CD8-positive, alpha-beta T cell (primary cell): ENCODE measurements at regions of chr1 and their contacts with region 1.

Region 1: GRCh38 chr1:156282479-156283222 is at the start of gene SMG5:
- DNase-seq: peak; percentile 89 to 99 (median 95)
- ATAC-seq: peak; percentile 91
- H3K4me3 ChIP-seq: peak within 1 kb of the TSS; percentile 62 to 80
- H3K4me3 Mint-ChIP-seq: peak within 1 kb of the TSS; percentile 93
- H3K27ac ChIP-seq: peak within 1 kb of the TSS; percentile 38 to 87
- H3K27ac Mint-ChIP-seq: peak within 1 kb of the TSS; percentile 91
- H3K4me1 ChIP-seq: peaks cover 28% of the 10 kb centered on the region
- H3K4me1 Mint-ChIP-seq: peaks cover 38% of the 10 kb centered on the region
- H3K27me3 ChIP-seq: no peaks in the 10 kb centered on the region
- H3K27me3 Mint-ChIP-seq: no peaks in the 10 kb centered on the region
- CTCF ChIP-seq: no peak
- total RNA-seq, gene SMG5: 68.9 to 70.2 TPM

Region 2: DNA sequence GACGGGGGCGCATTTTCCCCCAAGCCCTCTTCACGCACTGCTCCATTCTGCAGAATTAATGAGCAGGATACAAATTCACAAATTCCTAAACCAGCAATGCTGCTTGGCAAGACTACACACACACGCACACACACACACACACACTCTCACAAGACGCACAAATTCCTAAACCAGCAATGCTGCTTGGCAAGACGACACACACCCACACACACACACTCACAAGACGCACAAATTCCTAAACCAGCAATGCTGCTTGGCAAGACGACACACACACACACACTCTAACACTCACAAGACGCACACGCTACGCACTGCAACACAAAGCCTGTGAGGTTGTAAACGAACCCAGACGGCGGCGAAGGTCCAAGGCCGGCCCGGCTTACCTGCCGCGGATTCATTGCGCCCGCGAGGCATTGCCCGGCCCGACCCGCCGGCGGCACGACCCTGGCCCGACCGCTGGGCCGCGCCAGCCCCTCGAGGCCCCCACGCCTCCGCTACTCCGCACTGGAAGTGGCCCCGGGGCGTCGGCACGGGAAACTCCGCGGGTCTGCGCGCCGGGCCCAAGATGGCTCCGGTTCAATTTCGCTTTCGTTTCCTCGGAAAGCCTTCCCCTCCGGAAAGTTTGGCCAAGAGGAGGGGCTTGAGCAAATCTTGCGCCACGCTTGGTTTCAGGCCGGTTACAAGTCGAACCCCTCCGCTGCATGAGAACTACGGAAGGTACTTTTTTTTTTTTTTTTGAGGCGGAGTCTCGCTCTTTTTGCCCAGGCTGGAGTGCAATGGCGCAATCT is 1674.8 kb before region 1 on chr1 and contains the start of gene ADAR:
- CTCF ChIA-PET with region 1: no interaction called
- POLR2A ChIA-PET with region 1: no interaction called
- intact Hi-C with region 1: loop called in 1 of 2 experiments (anchors 5 kb)
- DNase-seq: peak; percentile 72 to 98 (median 87)
- ATAC-seq: peak; percentile 85
- H3K4me3 ChIP-seq: peak within 1 kb of the TSS; percentile 89 to 90
- H3K4me3 Mint-ChIP-seq: peak within 1 kb of the TSS; percentile 98
- H3K27ac ChIP-seq: peak within 1 kb of the TSS; percentile 92 to 96
- H3K27ac Mint-ChIP-seq: peak within 1 kb of the TSS; percentile 98
- H3K4me1 ChIP-seq: peaks cover 59% of the 10 kb centered on the region
- H3K4me1 Mint-ChIP-seq: peaks cover 73% of the 10 kb centered on the region
- H3K27me3 ChIP-seq: no peaks in the 10 kb centered on the region
- H3K27me3 Mint-ChIP-seq: no peaks in the 10 kb centered on the region
- CTCF ChIP-seq: no peak
- total RNA-seq, gene ADAR: 221 to 238 TPM

Region 3: GRCh38 chr1:155859234-155859829 is 423.3 kb before region 1 on chr1 and contains the start of gene SYT11:
- CTCF ChIA-PET with region 1: no interaction called
- POLR2A ChIA-PET with region 1: no interaction called
- intact Hi-C with region 1: loop called in 1 of 2 experiments (anchors 1 kb)
- DNase-seq: peak; percentile 79 to 97 (median 93)
- ATAC-seq: peak; percentile 85
- H3K4me3 ChIP-seq: peak within 1 kb of the TSS; percentile 61 to 64
- H3K4me3 Mint-ChIP-seq: peak within 1 kb of the TSS; percentile 83
- H3K27ac ChIP-seq: peak within 1 kb of the TSS; percentile 45 to 96
- H3K27ac Mint-ChIP-seq: peak within 1 kb of the TSS; percentile 90
- H3K4me1 ChIP-seq: peaks cover 37% of the 10 kb centered on the region
- H3K4me1 Mint-ChIP-seq: peaks cover 44% of the 10 kb centered on the region
- H3K27me3 ChIP-seq: no peaks in the 10 kb centered on the region
- H3K27me3 Mint-ChIP-seq: peaks cover 5% of the 10 kb centered on the region
- CTCF ChIP-seq: no peak
- total RNA-seq, gene SYT11: 6.9 to 8.6 TPM

Region 4: GRCh38 chr1:156020292-156021089 is 262.2 kb before region 1 on chr1 and contains the start of gene SSR2:
- CTCF ChIA-PET with region 1: no interaction called
- POLR2A ChIA-PET with region 1: no interaction called
- intact Hi-C with region 1: loop called in 1 of 2 experiments (anchors 2 kb)
- DNase-seq: peak; percentile 67 to 94 (median 84)
- ATAC-seq: peak; percentile 99
- H3K4me3 ChIP-seq: peak within 1 kb of the TSS; percentile 77 to 83
- H3K4me3 Mint-ChIP-seq: peak within 1 kb of the TSS; percentile 98
- H3K27ac ChIP-seq: peak within 1 kb of the TSS; percentile 61 to 64
- H3K27ac Mint-ChIP-seq: peak within 1 kb of the TSS; percentile 96
- H3K4me1 ChIP-seq: peaks cover 15% of the 10 kb centered on the region
- H3K4me1 Mint-ChIP-seq: peaks cover 30% of the 10 kb centered on the region
- H3K27me3 ChIP-seq: peaks cover 0 to 5% of the 10 kb centered on the region in 2 experiments
- H3K27me3 Mint-ChIP-seq: peaks cover 2% of the 10 kb centered on the region
- CTCF ChIP-seq: no peak
- total RNA-seq, gene SSR2: 208 to 212 TPM

Region 5: GRCh38 chr1:156193488-156194299 is 89.0 kb before region 1 on chr1 and contains the start of gene SLC25A44:
- CTCF ChIA-PET with region 1: no interaction called
- POLR2A ChIA-PET with region 1: interaction called, 3 read pairs
- intact Hi-C with region 1: loop called (anchors 1 kb)
- DNase-seq: peak; percentile 89 to 99 (median 97)
- ATAC-seq: peak; percentile 99
- H3K4me3 ChIP-seq: peak within 1 kb of the TSS; percentile 78 to 88
- H3K4me3 Mint-ChIP-seq: peak within 1 kb of the TSS; percentile 100
- H3K27ac ChIP-seq: peak within 1 kb of the TSS; percentile 67 to 85
- H3K27ac Mint-ChIP-seq: peak within 1 kb of the TSS; percentile 95
- H3K4me1 ChIP-seq: peaks cover 13% of the 10 kb centered on the region
- H3K4me1 Mint-ChIP-seq: peaks cover 47% of the 10 kb centered on the region
- H3K27me3 ChIP-seq: no peaks in the 10 kb centered on the region
- H3K27me3 Mint-ChIP-seq: no peaks in the 10 kb centered on the region
- CTCF ChIP-seq: peak; percentile 13
- total RNA-seq, gene SLC25A44: 12.1 to 12.6 TPM

Region 6: DNA sequence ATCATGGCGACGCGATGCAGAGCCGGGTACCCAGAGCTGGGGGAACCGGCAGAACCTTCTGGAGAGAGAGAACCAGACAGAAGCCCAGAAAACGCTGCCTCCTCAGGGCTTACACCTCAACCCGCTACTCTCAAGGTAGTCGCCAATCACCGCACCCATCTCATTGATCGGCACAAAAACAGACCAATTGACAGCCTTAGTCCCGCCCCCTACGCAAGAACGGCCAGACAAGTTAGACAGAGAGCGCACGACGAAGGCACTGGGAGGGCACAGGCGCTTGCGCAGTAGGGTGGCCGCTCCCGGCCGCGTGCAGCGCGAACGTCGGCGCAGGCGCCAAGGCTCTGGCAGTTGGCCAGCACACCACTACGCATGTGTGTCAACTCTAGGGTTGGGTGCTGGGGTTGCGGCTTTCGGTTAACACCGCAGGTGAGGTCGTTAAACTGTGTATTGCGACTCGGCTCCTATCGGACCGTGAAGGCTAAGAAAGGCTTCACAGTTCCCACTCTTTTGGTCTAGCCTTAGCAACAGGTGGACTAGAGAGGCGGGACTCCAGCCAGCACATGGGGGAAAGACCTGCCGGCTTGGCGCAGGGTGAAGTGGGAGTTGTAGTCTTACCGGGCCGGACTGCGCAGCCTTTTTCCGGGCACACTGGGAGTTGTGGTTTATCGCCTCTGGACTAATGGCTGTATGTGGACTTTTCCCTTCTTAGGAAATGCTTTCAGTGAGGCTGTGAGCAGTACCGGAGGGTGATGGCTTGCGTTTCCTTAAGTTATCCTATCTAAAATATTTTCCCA is 55.7 kb after region 1 on chr1 and contains the starts of genes CCT3 and TSACC:
- CTCF ChIA-PET with region 1: no interaction called
- POLR2A ChIA-PET with region 1: interaction called, 6 read pairs
- intact Hi-C with region 1: loop called (anchors 1 kb)
- DNase-seq: peak; percentile 97 to 100 (median 99)
- ATAC-seq: peak; percentile 95
- H3K4me3 ChIP-seq: peak within 1 kb of the TSS; percentile 69 to 85
- H3K4me3 Mint-ChIP-seq: peak within 1 kb of the TSS; percentile 95
- H3K27ac ChIP-seq: peak within 1 kb of the TSS; percentile 61 to 92
- H3K27ac Mint-ChIP-seq: peak within 1 kb of the TSS; percentile 95
- H3K4me1 ChIP-seq: peaks cover 25% of the 10 kb centered on the region
- H3K4me1 Mint-ChIP-seq: peaks cover 39% of the 10 kb centered on the region
- H3K27me3 ChIP-seq: no peaks in the 10 kb centered on the region
- H3K27me3 Mint-ChIP-seq: no peaks in the 10 kb centered on the region
- CTCF ChIP-seq: no peak
- total RNA-seq, gene CCT3: 49.2 to 53.4 TPM
- total RNA-seq, gene TSACC: 0.46 TPM in 1 of 2 experiments, not detected in the other

Region 7: DNA sequence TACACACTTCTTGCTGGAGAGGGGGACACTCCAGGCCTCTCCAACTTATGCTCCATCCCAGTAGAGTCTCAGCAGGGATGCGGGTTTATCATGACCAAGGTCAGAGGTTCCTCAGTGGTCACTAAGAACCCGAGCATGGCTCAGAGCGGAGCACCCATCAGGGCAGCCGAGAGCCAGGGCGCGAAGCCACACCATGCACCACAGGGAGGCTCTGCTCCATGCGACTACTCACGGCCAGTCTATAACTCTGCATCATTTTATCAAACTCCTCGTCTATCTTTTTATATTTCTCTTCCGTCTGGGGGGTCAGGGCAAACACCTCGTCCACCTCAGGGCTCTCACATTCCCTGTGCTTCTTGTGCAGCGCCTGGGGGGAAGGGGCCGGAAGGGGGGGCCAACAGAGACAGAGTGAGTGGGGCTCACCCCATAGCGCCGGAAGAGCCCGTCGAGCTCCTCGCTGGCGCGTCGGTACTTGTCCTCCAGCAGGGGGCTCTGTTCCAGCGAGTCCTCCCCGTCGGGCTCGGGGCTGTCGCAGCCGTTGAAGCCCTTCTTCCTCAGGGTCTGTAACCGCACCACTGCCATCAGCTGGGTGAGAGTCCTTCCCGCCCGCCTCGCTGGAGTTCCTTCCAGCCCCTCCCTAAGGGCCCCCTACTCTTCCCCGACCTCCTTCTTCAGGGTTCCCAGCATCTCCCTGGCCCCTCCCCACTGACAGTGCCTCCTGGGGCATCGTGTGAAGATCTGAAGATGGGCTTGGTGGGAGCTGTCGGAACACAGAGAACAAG is 198.0 kb after region 1 on chr1:
- CTCF ChIA-PET with region 1: no interaction called
- POLR2A ChIA-PET with region 1: no interaction called
- intact Hi-C with region 1: no loop called
- DNase-seq: peak; percentile 55 to 89 (median 85)
- ATAC-seq: peak; percentile 87
- H3K4me3 ChIP-seq: no peak overlapping the region
- H3K4me3 Mint-ChIP-seq: no peak overlapping the region
- H3K27ac ChIP-seq: peak overlapping the region; percentile 22 to 52
- H3K27ac Mint-ChIP-seq: peak overlapping the region; percentile 89
- H3K4me1 ChIP-seq: peaks cover 22% of the 10 kb centered on the region
- H3K4me1 Mint-ChIP-seq: peaks cover 47% of the 10 kb centered on the region
- H3K27me3 ChIP-seq: no peaks in the 10 kb centered on the region
- H3K27me3 Mint-ChIP-seq: no peaks in the 10 kb centered on the region
- CTCF ChIP-seq: peak; percentile 79

Region 8: GRCh38 chr1:156601122-156601830 is 318.6 kb after region 1 on chr1 and contains the start of gene GPATCH4:
- CTCF ChIA-PET with region 1: no interaction called
- POLR2A ChIA-PET with region 1: no interaction called
- intact Hi-C with region 1: loop called in 1 of 2 experiments (anchors 5 kb)
- DNase-seq: peak in 8 of 9 experiments; percentile 61 to 86 (median 72)
- ATAC-seq: peak; percentile 80
- H3K4me3 ChIP-seq: peak within 1 kb of the TSS; percentile 65 to 70
- H3K4me3 Mint-ChIP-seq: peak within 1 kb of the TSS; percentile 98
- H3K27ac ChIP-seq: peak within 1 kb of the TSS; percentile 57 to 80
- H3K27ac Mint-ChIP-seq: peak within 1 kb of the TSS; percentile 98
- H3K4me1 ChIP-seq: peaks cover 24% of the 10 kb centered on the region
- H3K4me1 Mint-ChIP-seq: peaks cover 34% of the 10 kb centered on the region
- H3K27me3 ChIP-seq: no peaks in the 10 kb centered on the region
- H3K27me3 Mint-ChIP-seq: no peaks in the 10 kb centered on the region
- CTCF ChIP-seq: no peak
- total RNA-seq, gene GPATCH4: 46.4 to 46.7 TPM

Region 9: DNA sequence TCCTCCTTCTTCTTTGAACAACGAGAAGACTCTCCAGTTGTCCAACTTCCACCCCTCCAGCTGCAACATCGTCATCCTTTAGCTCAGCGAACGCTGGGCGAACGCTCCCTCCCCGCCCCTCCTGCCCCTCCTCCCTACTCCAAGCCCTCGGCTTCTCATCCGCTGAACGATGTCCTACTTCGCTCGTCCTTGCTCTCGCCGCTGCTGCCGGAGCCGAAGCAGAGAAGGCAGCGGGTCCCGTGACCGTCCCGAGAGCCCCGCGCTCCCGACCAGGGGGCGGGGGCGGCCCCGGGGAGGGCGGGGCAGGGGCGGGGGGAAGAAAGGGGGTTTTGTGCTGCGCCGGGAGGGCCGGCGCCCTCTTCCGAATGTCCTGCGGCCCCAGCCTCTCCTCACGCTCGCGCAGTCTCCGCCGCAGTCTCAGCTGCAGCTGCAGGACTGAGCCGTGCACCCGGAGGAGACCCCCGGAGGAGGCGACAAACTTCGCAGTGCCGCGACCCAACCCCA is 359.2 kb after region 1 on chr1 and contains the start of gene BCAN:
- CTCF ChIA-PET with region 1: no interaction called
- POLR2A ChIA-PET with region 1: no interaction called
- intact Hi-C with region 1: no loop called
- DNase-seq: peak in 4 of 9 experiments; percentile 24 to 43 (median 36)
- ATAC-seq: peak; percentile 29
- H3K4me3 ChIP-seq: peak within 1 kb of the TSS in 1 of 2 experiments; percentile 15
- H3K4me3 Mint-ChIP-seq: peak within 1 kb of the TSS; percentile 73
- H3K27ac ChIP-seq: no peak within 1 kb of the TSS
- H3K27ac Mint-ChIP-seq: no peak within 1 kb of the TSS
- H3K4me1 ChIP-seq: peaks cover 31% of the 10 kb centered on the region
- H3K4me1 Mint-ChIP-seq: peaks cover 32% of the 10 kb centered on the region
- H3K27me3 ChIP-seq: peaks cover 35 to 47% of the 10 kb centered on the region in 2 experiments
- H3K27me3 Mint-ChIP-seq: peaks cover 77% of the 10 kb centered on the region
- CTCF ChIP-seq: no peak
- total RNA-seq, gene BCAN: not detected